Transverse colon (tissue), 4 donors: ENCODE measurements at regions of chr12 and their contacts with region 1.

Region 1: DNA sequence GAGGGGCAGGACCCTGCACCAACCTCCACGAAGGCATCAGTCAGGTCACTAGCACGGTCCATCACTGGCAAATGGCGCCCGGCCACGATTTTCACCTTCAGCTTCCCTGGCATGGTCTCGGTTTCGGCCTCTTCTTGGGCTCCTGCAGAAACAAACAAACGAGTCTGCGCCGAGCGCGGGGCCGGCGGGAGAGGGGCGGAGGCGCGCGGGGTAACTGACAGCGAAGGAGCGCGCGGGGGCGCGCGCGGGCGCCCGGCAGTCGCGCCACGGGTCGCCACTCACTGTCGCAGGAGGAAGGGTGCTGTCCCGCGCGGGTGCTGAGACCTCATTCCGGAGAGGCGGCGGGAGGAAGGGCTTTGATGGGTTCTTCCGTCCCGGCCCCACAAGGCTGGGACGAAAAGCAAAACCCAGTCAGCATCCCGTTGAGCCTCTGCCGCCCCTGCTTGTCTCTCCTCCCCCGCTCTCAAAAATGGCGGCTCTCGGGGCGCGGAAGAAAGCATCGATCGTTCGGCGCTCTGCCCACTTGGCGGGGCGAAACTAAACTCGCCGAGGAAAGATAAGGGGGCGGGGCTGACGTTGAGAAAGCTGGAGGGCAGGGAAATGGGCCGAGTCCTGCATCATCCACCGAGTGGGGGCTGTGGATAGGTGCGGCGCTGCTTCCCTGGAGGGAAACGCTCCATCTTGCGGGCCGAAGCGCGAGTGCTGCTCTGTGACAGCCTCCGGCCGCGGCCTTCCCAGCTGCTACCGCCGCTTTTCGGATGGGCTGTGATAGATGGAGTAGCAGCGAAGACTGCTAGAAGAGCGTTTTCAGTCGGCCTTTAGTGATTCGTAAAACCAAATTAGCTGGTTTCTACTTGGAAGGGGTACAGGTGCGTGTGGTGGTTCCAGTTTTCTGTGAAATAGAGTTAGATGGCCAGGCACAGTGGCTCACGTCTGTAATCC is at the start of gene C2CD5:
- DNase-seq: peak; percentile 98
- H3K4me3 ChIP-seq: peak within 1 kb of the TSS; percentile 54 to 91 (median 70)
- H3K27ac ChIP-seq: peak within 1 kb of the TSS; percentile 89 to 99 (median 94)
- H3K4me1 ChIP-seq: peaks cover 10 to 27% (median 18%) of the 10 kb centered on the region in 4 donors
- H3K27me3 ChIP-seq: no peaks in the 10 kb centered on the region
- CTCF ChIP-seq: peak; percentile 20 to 51 (median 33)
- EP300 ChIP-seq: no peak
- POLR2A ChIP-seq: peak; percentile 88
- total RNA-seq, gene C2CD5: 47.9 to 123 (median 63.6) TPM

Region 2: GRCh38 chr12:22573181-22573580 is 28.9 kb after region 1 on chr12:
- in situ Hi-C with region 1: no loop called
- intact Hi-C with region 1: no loop called
- DNase-seq: no peak
- H3K4me3 ChIP-seq: no peak overlapping the region
- H3K27ac ChIP-seq: no peak overlapping the region
- H3K4me1 ChIP-seq: peaks cover 0 to 4% (median 2%) of the 10 kb centered on the region in 4 donors
- H3K27me3 ChIP-seq: no peaks in the 10 kb centered on the region
- CTCF ChIP-seq: no peak
- EP300 ChIP-seq: no peak
- POLR2A ChIP-seq: no peak

Region 3: DNA sequence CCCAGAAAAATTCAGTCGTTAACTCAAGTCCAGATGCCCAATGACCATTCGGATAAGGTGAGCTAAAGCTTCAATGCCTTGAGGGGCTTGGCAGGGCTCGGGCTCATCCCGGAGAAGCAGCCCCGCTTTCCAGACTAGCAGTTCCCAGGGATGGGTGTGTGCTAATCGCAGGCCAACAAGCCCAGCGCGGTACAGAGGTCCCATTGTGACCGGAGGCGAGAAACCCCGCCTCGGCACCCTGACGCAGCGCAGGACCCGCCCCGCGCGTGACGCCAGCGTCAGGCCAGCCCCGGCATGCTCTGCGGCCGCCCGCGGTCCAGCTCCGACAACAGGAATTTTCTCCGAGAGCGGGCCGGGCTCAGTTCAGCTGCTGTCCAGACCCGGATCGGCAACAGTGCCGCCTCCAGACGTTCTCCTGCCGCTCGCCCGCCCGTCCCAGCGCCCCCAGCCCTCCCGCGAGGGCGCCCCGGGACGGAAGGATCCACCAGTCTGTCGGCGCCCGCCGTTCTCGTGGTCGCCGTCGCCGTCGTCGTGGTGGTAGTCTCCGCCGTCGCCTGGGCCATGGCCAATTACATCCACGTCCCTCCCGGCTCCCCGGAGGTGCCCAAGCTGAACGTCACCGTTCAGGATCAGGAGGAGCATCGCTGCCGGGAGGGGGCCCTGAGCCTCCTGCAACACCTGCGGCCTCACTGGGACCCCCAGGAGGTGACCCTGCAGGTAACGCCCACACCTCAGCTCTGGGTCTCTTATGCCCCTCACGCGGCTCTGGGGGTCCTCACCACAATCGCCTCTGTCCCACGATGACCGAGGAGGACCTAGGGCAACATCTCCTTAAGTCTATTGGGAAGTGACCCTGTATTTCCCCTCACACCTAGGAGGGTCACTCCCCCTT is 80.8 kb after region 1 on chr12 and contains the start of gene ETNK1:
- in situ Hi-C with region 1: loop called (anchors 5 to 10 kb)
- intact Hi-C with region 1: no loop called
- DNase-seq: peak; percentile 97
- H3K4me3 ChIP-seq: peak within 1 kb of the TSS; percentile 84 to 92 (median 88)
- H3K27ac ChIP-seq: peak within 1 kb of the TSS; percentile 96 to 99 (median 98)
- H3K4me1 ChIP-seq: peaks cover 11 to 40% (median 23%) of the 10 kb centered on the region in 4 donors
- H3K27me3 ChIP-seq: no peaks in the 10 kb centered on the region
- CTCF ChIP-seq: peak in 2 of 5 experiments; percentile 23 to 27
- EP300 ChIP-seq: no peak
- POLR2A ChIP-seq: peak; percentile 98
- total RNA-seq, gene ETNK1: 48.6 to 129 (median 102) TPM

Region 4: DNA sequence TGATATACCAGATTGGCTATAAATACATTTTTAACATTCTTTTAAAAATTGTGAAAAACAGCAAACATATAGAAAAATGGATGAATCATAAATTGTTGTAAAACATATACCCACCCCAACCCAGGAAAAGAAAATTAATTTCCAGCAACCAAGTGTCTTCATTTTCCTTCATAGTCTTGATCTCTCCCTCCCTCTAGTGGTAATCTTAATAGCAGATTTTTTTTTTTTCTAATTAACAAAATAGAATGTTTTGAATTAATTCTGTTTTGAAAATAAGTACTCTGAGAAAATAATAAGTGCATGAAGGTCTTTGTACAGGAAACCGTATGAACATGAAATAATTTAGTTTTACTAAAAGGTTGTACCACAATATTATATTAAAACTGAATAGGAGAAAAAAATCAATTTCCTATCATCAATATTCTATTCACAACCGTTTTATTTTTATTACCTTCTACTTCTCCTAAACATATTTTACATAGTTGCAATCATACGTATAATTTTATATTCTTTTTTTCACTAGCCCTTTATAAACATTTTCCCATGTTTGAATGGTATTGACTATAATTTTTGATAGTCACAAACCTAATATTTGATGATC is 87.7 kb after region 1 on chr12:
- in situ Hi-C with region 1: loop called (anchors 5 to 10 kb)
- intact Hi-C with region 1: loop called (anchors 2 kb)
- DNase-seq: no peak
- H3K4me3 ChIP-seq: no peak overlapping the region
- H3K27ac ChIP-seq: no peak overlapping the region
- H3K4me1 ChIP-seq: peaks cover 6 to 48% (median 27%) of the 10 kb centered on the region in 4 donors
- H3K27me3 ChIP-seq: no peaks in the 10 kb centered on the region
- CTCF ChIP-seq: peak; percentile 59 to 68 (median 65)
- EP300 ChIP-seq: no peak
- POLR2A ChIP-seq: no peak

Region 5: DNA sequence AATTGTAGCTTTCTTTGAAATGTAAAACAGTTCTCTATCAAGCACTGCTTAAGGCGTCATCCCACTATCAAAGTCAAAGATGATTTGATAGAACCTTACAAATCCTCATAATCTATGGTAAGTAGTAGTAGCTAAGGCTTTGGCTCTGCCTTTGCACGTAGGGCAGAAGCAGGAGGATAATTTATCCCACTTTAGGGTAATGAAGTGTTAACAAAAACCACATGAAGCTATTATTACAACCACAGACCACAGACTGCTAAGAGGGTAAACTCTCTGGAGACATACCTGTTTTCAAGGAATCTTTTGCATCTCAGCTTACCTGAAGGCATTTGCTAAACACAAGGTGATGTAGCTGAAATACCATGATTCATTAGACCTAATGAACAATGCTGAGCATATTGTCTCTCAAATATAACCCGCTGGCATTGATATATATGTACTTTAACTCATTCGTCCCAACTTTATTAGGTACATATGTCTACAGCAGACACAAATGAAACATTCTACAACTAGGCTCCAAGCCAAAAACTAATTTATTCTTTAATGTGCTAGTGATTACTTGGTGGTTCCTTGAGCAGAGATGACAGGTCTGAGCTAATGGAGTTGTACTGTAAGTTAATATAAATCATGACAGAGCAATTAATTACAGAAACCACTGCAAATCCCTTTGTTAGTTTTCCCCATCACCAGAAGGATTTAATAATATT is 449.5 kb after region 1 on chr12:
- in situ Hi-C with region 1: no loop called
- intact Hi-C with region 1: no loop called
- DNase-seq: no peak
- H3K4me3 ChIP-seq: no peak overlapping the region
- H3K27ac ChIP-seq: no peak overlapping the region
- H3K4me1 ChIP-seq: no peaks in the 10 kb centered on the region
- H3K27me3 ChIP-seq: no peaks in the 10 kb centered on the region
- CTCF ChIP-seq: no peak
- EP300 ChIP-seq: no peak
- POLR2A ChIP-seq: no peak